CD4-positive, alpha-beta memory T cell (primary cell): ENCODE measurements at regions of chr10 and their contacts with region 1.

Region 1: GRCh38 chr10:72337020-72337629 is 17.6 kb downstream of the DNAJB12 start:
- DNase-seq: peak in 4 of 5 donors; percentile 44 to 68 (median 50)
- H3K4me3 ChIP-seq: no peak overlapping the region
- H3K4me3 Mint-ChIP-seq: peak overlapping the region in 2 of 8 donors; percentile 17 to 43
- H3K27ac ChIP-seq: peak overlapping the region; percentile 76
- H3K27ac Mint-ChIP-seq: peak overlapping the region; percentile 82 to 98 (median 95)
- H3K4me1 ChIP-seq: peaks cover 62% of the 10 kb centered on the region
- H3K4me1 Mint-ChIP-seq: peaks cover 31 to 69% (median 55%) of the 10 kb centered on the region in 4 donors
- H3K27me3 ChIP-seq: no peaks in the 10 kb centered on the region
- H3K27me3 Mint-ChIP-seq: no peaks in the 10 kb centered on the region

Region 2: GRCh38 chr10:71161425-71161824 is 1175.7 kb before region 1 on chr10:
- CTCF ChIA-PET with region 1: no interaction called
- POLR2A ChIA-PET with region 1: no interaction called
- intact Hi-C with region 1: no loop called
- DNase-seq: no peak
- H3K4me3 ChIP-seq: no peak overlapping the region
- H3K4me3 Mint-ChIP-seq: no peak overlapping the region
- H3K27ac ChIP-seq: no peak overlapping the region
- H3K27ac Mint-ChIP-seq: no peak overlapping the region
- H3K4me1 ChIP-seq: no peaks in the 10 kb centered on the region
- H3K4me1 Mint-ChIP-seq: no peaks in the 10 kb centered on the region
- H3K27me3 ChIP-seq: no peaks in the 10 kb centered on the region
- H3K27me3 Mint-ChIP-seq: peaks cover 3 to 10% of the 10 kb centered on the region in 2 donors

Region 3: DNA sequence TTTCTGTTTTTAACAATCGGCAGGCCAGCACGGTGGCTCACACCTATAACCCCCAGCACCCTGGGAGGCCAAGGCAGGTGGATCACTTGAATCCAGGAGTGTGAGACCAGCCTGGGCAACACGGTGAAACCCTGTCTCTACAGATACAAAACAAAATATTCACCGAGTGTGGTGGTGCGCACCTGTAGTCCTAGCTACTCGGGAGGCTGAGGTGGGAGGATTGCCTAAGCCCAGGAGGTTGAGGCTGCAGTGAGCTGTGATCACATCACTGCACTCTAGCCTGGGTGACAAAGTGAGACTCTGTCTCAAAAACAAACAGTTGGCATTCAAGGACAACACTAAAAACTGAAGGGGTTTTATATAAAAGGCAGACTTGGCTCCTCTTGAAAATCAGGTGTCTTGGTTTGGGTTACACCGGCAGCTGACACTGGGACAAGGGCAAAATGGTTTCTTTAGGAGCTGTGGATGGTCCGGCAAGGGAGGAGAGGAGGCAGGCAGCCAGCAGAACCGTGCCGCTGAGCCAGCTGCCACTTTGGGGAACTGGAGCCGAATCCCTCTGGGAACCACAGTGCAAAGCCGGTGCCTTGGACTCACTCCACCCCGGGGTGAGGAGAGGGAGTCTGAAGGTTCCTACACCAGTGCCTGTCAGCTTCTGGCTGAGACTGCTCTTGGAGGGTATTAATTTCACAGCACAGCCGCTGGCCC is 320.4 kb before region 1 on chr10:
- CTCF ChIA-PET with region 1: no interaction called
- POLR2A ChIA-PET with region 1: no interaction called
- intact Hi-C with region 1: no loop called
- DNase-seq: no peak
- H3K4me3 ChIP-seq: no peak overlapping the region
- H3K4me3 Mint-ChIP-seq: no peak overlapping the region
- H3K27ac ChIP-seq: no peak overlapping the region
- H3K27ac Mint-ChIP-seq: no peak overlapping the region
- H3K4me1 ChIP-seq: no peaks in the 10 kb centered on the region
- H3K4me1 Mint-ChIP-seq: peaks cover 0 to 5% (median 2%) of the 10 kb centered on the region in 4 donors
- H3K27me3 ChIP-seq: no peaks in the 10 kb centered on the region
- H3K27me3 Mint-ChIP-seq: peaks cover 0 to 11% of the 10 kb centered on the region in 2 donors

Region 4: GRCh38 chr10:72048450-72049124 is 288.5 kb before region 1 on chr10:
- CTCF ChIA-PET with region 1: interaction called, 75 read pairs
- POLR2A ChIA-PET with region 1: interaction called, 10 read pairs
- intact Hi-C with region 1: loop called (anchors 1 kb)
- DNase-seq: peak; percentile 81 to 84 (median 81)
- H3K4me3 ChIP-seq: no peak overlapping the region
- H3K4me3 Mint-ChIP-seq: no peak overlapping the region
- H3K27ac ChIP-seq: no peak overlapping the region
- H3K27ac Mint-ChIP-seq: peak overlapping the region in 3 of 7 donors; percentile 20 to 78 (median 70)
- H3K4me1 ChIP-seq: no peaks in the 10 kb centered on the region
- H3K4me1 Mint-ChIP-seq: peaks cover 1 to 8% (median 6%) of the 10 kb centered on the region in 4 donors
- H3K27me3 ChIP-seq: no peaks in the 10 kb centered on the region
- H3K27me3 Mint-ChIP-seq: no peaks in the 10 kb centered on the region

Region 5: GRCh38 chr10:72088889-72089575 is 248.1 kb before region 1 on chr10:
- CTCF ChIA-PET with region 1: interaction called, 11 read pairs
- POLR2A ChIA-PET with region 1: interaction called, 59 read pairs
- intact Hi-C with region 1: no loop called
- DNase-seq: peak in 1 of 5 donors; percentile 78
- H3K4me3 ChIP-seq: peak overlapping the region; percentile 82 to 98
- H3K4me3 Mint-ChIP-seq: peak overlapping the region; percentile 97 to 100 (median 100)
- H3K27ac ChIP-seq: peak overlapping the region; percentile 94
- H3K27ac Mint-ChIP-seq: peak overlapping the region; percentile 97 to 100 (median 100)
- H3K4me1 ChIP-seq: peaks cover 48% of the 10 kb centered on the region
- H3K4me1 Mint-ChIP-seq: peaks cover 31 to 58% (median 43%) of the 10 kb centered on the region in 4 donors
- H3K27me3 ChIP-seq: no peaks in the 10 kb centered on the region
- H3K27me3 Mint-ChIP-seq: peaks cover 0 to 2% of the 10 kb centered on the region in 2 donors

Region 6: DNA sequence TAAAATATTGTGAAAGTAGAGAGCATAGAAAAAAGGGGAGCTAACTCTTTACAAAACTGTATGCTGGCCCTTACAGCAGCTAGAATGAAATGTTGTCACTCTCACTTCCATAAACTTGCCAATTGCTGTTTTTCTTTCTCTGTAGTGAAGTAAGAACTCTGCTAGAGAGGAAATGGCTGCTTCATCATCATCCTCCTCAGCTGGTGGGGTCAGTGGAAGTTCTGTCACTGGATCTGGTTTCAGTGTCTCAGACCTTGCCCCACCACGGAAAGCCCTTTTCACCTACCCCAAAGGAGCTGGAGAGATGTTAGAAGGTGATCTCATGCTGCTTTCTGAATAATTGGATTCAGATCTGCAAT is 113.4 kb before region 1 on chr10:
- CTCF ChIA-PET with region 1: interaction called, 89 read pairs
- POLR2A ChIA-PET with region 1: interaction called, 4 read pairs
- intact Hi-C with region 1: loop called (anchors 2 kb)
- DNase-seq: no peak
- H3K4me3 ChIP-seq: no peak overlapping the region
- H3K4me3 Mint-ChIP-seq: peak overlapping the region in 3 of 8 donors; percentile 22 to 69 (median 44)
- H3K27ac ChIP-seq: no peak overlapping the region
- H3K27ac Mint-ChIP-seq: peak overlapping the region; percentile 17 to 91 (median 78)
- H3K4me1 ChIP-seq: peaks cover 54% of the 10 kb centered on the region
- H3K4me1 Mint-ChIP-seq: peaks cover 36 to 57% (median 45%) of the 10 kb centered on the region in 4 donors
- H3K27me3 ChIP-seq: no peaks in the 10 kb centered on the region
- H3K27me3 Mint-ChIP-seq: no peaks in the 10 kb centered on the region

Region 7: DNA sequence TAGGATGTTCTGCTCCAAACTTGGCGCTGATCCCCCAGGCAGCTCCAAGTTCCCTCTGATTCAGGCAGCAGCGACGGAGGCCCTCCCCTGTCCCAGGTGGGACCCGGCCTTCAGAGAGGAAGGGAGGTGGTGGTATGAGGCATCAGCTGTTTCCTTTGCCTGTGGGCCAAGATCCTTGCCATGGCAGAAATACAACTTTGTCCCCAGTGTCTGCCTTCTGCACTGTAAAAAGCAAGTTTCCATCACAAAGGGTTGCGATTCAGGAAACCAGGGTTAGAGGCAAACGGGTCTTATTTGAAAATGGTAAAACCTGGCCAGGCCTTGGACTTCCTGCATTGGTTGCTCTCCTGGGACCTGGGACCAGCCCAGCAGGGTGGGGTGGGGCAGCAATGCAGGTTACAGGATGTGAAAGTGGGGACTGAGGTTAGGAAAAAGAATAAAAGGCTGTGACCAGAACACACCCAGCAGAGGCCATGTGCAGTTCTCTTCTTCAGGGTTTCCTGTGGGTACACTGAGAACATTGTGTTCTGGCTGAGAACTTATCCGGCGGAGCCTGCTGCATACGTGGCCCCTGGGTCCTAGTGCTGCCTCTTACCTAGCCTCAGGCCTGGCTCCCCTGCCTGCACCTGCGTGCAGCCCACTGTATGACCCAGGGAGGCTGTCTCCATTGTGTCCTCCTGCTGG is 88.5 kb before region 1 on chr10:
- CTCF ChIA-PET with region 1: interaction called, 25 read pairs
- POLR2A ChIA-PET with region 1: interaction called, 19 read pairs
- intact Hi-C with region 1: loop called (anchors 1 kb)
- DNase-seq: peak; percentile 85 to 90 (median 87)
- H3K4me3 ChIP-seq: peak overlapping the region; percentile 31 to 33
- H3K4me3 Mint-ChIP-seq: peak overlapping the region; percentile 83 to 92 (median 86)
- H3K27ac ChIP-seq: peak overlapping the region; percentile 55
- H3K27ac Mint-ChIP-seq: peak overlapping the region; percentile 95 to 98 (median 96)
- H3K4me1 ChIP-seq: peaks cover 96% of the 10 kb centered on the region
- H3K4me1 Mint-ChIP-seq: peaks cover 58 to 91% (median 77%) of the 10 kb centered on the region in 4 donors
- H3K27me3 ChIP-seq: no peaks in the 10 kb centered on the region
- H3K27me3 Mint-ChIP-seq: no peaks in the 10 kb centered on the region

Region 8: DNA sequence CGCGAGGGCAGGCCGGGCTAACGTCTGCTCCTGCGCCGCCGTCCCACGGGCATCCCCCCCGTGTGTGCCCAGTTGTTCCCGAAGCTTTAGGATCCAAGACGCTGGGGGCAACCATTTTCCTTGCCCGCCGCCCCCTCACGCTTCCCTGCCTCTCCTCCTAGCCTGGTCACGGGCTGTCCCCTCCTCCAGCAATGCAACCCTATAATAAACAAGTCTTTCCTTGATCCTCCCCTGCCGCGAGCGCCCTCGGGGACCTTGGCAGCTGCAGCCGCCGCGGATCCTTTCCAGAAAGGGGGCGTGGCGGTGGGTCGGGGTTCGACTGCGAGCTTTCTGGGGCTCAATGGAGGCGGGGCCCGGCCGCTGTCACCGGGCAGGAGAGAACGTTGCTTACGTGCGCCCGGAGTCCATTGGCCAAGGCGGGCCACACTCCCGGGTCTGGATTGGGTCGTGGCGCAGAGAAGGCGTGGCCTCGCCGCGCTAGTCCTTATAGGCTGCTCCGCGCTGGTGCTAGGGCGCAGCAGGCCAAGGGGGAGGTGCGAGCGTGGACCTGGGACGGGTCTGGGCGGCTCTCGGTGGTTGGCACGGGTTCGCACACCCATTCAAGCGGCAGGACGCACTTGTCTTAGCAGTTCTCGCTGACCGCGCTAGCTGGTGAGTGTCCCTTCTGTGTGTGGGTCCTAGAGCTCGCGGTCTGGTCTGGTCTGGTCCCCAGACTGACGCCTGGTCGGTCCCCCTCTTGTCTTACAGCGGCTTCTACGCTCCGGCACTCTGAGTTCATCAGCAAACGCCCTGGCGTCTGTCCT is 63.5 kb before region 1 on chr10 and contains the start of gene DDIT4:
- CTCF ChIA-PET with region 1: interaction called, 168 read pairs
- POLR2A ChIA-PET with region 1: interaction called, 94 read pairs
- intact Hi-C with region 1: loop called (anchors 1 kb)
- DNase-seq: peak; percentile 95 to 98 (median 96)
- H3K4me3 ChIP-seq: peak within 1 kb of the TSS; percentile 99 to 100
- H3K4me3 Mint-ChIP-seq: peak within 1 kb of the TSS; percentile 96 to 100 (median 98)
- H3K27ac ChIP-seq: peak within 1 kb of the TSS; percentile 99
- H3K27ac Mint-ChIP-seq: peak within 1 kb of the TSS; percentile 83 to 99 (median 96)
- H3K4me1 ChIP-seq: peaks cover 51% of the 10 kb centered on the region
- H3K4me1 Mint-ChIP-seq: peaks cover 23 to 60% (median 39%) of the 10 kb centered on the region in 4 donors
- H3K27me3 ChIP-seq: no peaks in the 10 kb centered on the region
- H3K27me3 Mint-ChIP-seq: no peaks in the 10 kb centered on the region
- total RNA-seq, gene DDIT4: 23.1 to 24.5 TPM